ENCODE measurements at regions of chr10 and their contacts with region 1.

Region 1: DNA sequence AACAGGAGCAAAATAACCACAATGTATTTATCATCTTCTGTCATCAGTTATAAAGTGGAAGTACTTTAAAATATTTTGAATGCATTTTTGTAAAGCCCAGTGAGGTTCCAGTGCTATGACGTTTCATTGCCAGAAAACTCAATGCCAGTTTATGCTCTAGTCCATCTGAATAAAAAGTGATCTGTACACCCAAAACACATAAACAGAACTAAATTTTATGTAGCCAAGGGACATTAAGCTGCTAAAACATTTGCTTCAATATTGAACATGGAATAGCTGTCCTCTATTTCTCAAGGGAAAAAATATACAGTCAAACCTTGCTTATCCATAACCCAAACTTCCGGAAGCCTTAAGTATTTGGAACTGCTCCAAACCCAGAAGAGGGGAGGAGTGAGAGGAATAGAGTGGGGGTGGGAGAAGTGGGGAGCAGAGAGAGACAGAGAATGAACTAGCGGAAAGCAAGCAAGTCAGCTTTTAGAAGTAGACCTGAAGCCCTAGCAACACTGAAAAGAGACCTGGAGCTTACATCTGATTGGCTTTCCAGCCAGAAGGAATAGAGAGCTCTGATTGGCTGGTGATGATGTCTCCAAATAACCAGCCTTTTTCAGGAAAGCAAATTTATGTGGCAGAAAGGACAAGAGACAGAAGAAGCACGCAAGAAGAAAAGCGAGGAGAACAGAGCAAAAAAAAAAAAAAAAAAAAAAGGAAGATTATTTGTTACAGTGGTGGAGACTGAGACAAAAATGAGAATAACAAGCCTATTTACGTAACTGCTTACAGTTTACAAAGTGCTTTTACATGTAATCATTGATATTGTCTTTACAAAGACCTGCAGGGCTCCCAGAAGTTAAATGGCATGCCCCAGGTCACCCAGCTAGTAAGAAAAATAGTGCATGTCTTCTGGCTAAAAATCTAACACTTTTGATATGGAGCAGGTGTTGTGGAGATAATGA is 196.0 kb downstream of the RNLS start:
- DNase-seq: no peak
- ATAC-seq: peak; percentile 23
- H3K4me3 Mint-ChIP-seq: no peak overlapping the region
- H3K27ac Mint-ChIP-seq: no peak overlapping the region
- H3K4me1 Mint-ChIP-seq: peaks cover 28% of the 10 kb centered on the region
- H3K27me3 Mint-ChIP-seq: no peaks in the 10 kb centered on the region

Region 2: GRCh38 chr10:88270871-88271713 is 116.0 kb before region 1 on chr10:
- POLR2A ChIA-PET with region 1: interaction called, 10 read pairs
- DNase-seq: peak; percentile 43
- ATAC-seq: peak; percentile 82
- H3K4me3 Mint-ChIP-seq: peak overlapping the region; percentile 31
- H3K27ac Mint-ChIP-seq: peak overlapping the region; percentile 69
- H3K4me1 Mint-ChIP-seq: peaks cover 31% of the 10 kb centered on the region
- H3K27me3 Mint-ChIP-seq: peaks cover 21% of the 10 kb centered on the region

Measured in activated naive CD8-positive, alpha-beta T cell treated with anti-CD3 and anti-CD28 coated beads, Interleukin-2, amount 10 ng/mL, durations not matched to agents 7 days and 5 days (primary cell).